ENCODE measurements at regions of chr12 and their contacts with region 1.

Region 1: GRCh38 chr12:95336390-95337067 is 118.9 kb downstream of the VEZT start:
- DNase-seq: peak; percentile 41 to 79
- ATAC-seq: peak; percentile 88 to 97 (median 92)
- H3K4me3 ChIP-seq: peak overlapping the region; percentile 39
- H3K27ac ChIP-seq: peak overlapping the region; percentile 39
- H3K4me1 ChIP-seq: peaks cover 5% of the 10 kb centered on the region
- H3K27me3 ChIP-seq: no peaks in the 10 kb centered on the region
- CTCF ChIP-seq: peak; percentile 92

Region 2: DNA sequence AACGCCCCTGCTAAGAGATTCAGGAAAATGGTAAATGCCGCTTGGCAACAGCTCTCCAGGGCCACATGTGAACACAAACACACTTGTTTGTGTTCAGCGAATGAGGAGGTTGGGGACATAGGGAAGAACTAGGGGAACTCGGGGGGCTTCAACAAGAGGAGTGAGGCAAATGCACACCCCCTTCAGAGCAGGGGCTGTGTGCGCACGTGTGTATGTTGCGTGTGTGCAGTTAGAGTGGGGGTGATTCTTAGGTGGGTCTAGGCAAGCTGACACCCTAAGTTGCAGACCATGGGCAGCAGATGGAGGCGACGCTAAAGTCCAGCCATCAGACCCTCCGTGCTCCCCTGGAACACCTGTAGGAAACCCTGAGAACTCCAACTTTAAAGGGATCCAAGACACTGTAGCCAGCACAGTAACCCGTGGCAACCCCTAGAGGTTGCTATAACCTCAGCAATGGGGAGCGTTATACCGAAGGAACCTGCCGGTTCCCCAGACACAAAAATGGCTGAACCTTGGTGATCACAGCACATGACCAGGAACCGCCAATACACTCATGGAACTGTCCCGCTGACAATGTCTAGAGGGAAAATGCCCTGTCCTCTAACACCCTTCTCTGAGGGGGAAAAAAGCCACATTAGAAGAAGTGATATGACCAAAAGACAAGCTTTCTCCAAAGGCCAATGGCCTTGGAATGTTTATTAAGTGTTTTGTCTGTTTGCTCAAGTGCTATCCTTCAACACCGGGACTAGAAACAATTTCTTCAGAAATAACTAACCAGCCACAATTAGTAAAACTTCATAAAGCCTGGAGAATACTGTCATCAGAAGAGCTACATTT is 790.4 kb before region 1 on chr12:
- intact Hi-C with region 1: loop called (anchors 10 kb)
- DNase-seq: no peak
- ATAC-seq: peak; percentile 92 to 96 (median 94)
- H3K4me3 ChIP-seq: no peak overlapping the region
- H3K27ac ChIP-seq: no peak overlapping the region
- H3K4me1 ChIP-seq: no peaks in the 10 kb centered on the region
- H3K27me3 ChIP-seq: no peaks in the 10 kb centered on the region
- CTCF ChIP-seq: peak; percentile 84

Region 3: DNA sequence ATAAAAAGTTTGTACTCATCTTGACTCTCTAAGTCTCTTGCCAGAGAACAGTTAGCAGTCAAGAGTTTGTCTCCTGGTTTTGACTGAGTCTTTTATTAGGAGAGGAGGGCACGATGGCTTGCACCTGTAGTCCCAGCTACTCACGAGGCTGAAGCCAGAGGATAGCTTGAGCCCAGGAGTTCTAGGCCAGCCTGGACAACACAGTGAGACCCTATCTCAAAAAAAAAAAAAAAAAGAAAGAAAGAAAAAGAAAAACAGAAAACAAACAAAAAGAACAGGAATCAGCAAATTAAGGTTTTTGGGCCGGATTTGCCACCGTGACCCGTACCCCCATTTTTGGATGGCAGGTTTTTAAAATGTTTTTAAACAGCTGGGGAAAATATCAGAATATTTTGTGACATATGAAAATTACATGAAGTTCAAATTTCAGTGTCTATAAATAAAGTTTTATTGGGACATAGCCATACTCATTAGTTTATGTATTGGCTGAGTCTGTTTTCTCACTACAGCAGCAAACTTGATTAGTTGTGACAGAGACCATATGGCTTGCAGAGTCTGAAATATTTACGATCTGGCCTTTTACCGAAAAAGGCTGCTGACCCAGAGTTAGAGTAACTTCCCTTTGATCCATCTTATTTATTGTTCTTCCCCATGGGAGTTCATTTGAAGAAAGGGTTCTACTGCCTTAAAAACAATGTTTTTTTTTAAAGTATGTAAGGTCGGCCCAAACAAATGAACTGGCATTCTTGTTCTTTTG is 87.7 kb before region 1 on chr12:
- intact Hi-C with region 1: no loop called
- DNase-seq: no peak
- ATAC-seq: no peak
- H3K4me3 ChIP-seq: no peak overlapping the region
- H3K27ac ChIP-seq: no peak overlapping the region
- H3K4me1 ChIP-seq: peaks cover 38% of the 10 kb centered on the region
- H3K27me3 ChIP-seq: no peaks in the 10 kb centered on the region
- CTCF ChIP-seq: no peak

Region 4: GRCh38 chr12:95532851-95533250 is 196.3 kb after region 1 on chr12:
- intact Hi-C with region 1: loop called in 1 of 2 experiments (anchors 5 kb)
- DNase-seq: no peak
- ATAC-seq: no peak
- H3K4me3 ChIP-seq: no peak overlapping the region
- H3K27ac ChIP-seq: no peak overlapping the region
- H3K4me1 ChIP-seq: no peaks in the 10 kb centered on the region
- H3K27me3 ChIP-seq: no peaks in the 10 kb centered on the region
- CTCF ChIP-seq: no peak